Dendritic cell treated with granulocyte-macrophage colony-stimulating factor and Interleukin-4, amounts not matched to agents 40 ng/mL and 50 ng/mL, for 4 days (primary cell): ENCODE measurements at regions of chr9 and their contacts with region 1.

Region 1: GRCh38 chr9:110687497-110687896 is 18.9 kb downstream of the MUSK start:
- H3K4me3 Mint-ChIP-seq: no peak overlapping the region
- H3K27ac Mint-ChIP-seq: no peak overlapping the region
- H3K4me1 Mint-ChIP-seq: no peaks in the 10 kb centered on the region
- H3K27me3 Mint-ChIP-seq: no peaks in the 10 kb centered on the region

Region 2: DNA sequence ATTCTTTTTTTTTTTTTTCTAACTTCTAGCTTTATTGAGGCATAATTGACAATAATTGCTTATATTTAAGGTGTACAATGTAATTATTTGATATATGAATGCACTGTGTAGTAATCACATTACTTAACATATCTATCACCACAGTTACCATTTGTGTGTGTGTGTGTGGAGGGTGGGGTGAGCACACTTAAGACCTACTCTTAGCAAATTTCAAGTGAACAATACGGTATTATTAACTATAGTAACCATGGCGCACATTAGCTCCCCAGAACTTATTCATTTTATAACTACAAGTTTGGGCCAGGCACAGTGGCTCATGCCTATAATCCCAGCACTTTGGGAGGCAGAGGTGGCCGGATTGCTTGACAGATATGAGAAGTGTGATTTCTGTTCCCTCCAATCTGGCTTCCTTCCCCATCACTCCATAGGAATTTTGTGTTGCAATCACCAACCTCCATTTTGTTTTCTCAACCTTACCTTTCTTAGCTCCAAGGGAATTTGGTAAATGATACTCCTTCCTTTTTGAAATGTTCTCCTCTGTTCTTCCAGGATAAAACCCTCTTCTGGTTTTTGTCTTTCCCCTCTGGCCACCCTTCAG is 446.1 kb before region 1 on chr9:
- intact Hi-C with region 1: no loop called
- H3K4me3 Mint-ChIP-seq: no peak overlapping the region
- H3K27ac Mint-ChIP-seq: no peak overlapping the region
- H3K4me1 Mint-ChIP-seq: no peaks in the 10 kb centered on the region
- H3K27me3 Mint-ChIP-seq: no peaks in the 10 kb centered on the region

Region 3: GRCh38 chr9:110672873-110673510 is 14.5 kb before region 1 on chr9:
- intact Hi-C with region 1: no loop called
- H3K4me3 Mint-ChIP-seq: no peak overlapping the region
- H3K27ac Mint-ChIP-seq: no peak overlapping the region
- H3K4me1 Mint-ChIP-seq: peaks cover 6% of the 10 kb centered on the region
- H3K27me3 Mint-ChIP-seq: no peaks in the 10 kb centered on the region

Region 4: DNA sequence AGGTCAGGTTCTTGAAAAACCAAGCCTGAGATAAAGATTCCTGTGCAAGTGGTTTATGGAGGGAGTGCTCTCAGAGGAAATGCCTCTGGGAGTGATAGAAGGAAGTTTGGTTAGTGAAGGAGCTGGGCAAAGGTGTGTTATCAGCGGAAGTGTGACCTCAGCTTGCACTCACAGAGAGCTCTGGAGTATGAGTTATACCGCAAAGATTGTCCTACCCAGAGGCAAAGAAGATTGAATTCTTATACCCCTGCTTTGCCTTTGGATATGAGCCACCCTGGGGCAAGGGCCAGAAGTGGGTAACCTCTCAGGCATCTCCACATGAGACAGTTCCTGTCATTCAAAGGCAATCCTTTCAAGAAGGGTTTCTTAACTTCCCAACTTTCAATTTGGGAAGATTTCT is 126.7 kb after region 1 on chr9:
- intact Hi-C with region 1: loop called (anchors 10 kb)
- H3K4me3 Mint-ChIP-seq: no peak overlapping the region
- H3K27ac Mint-ChIP-seq: no peak overlapping the region
- H3K4me1 Mint-ChIP-seq: no peaks in the 10 kb centered on the region
- H3K27me3 Mint-ChIP-seq: no peaks in the 10 kb centered on the region